ENCODE measurements at regions of chr13 and their contacts with region 1.

Region 1: DNA sequence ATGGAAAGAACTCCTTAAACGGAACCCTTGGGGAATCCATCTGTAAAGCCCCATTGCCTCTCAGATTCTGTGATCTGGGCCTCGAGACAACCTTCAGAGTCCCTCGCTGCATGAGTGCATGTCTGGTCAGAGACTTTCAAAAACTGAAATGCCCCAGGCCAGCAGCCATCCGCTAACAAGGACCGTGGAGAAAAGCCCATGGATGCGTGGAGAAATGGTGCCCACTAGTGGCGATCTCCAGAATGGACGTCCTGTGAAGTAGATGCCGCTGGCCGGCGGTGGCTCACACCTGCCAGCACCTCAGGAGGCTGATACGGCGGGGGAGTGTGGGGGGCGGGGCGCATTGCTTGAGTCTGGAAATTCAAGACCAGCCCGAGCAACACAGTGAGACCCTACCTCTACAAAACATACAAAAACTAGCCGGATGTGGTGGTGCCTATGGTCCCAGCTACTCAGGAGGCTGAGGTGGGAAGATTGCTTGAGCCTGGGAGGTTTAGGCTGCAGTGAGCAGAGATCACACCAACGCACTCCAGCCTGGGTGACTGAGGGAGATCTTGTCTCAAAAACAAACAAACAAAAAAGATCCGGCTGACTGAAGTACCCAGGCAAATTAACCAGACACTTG is 7.9 kb upstream of the CDC16 start:
- DNase-seq: peak; percentile 58
- ATAC-seq: peak; percentile 94
- H3K4me3 ChIP-seq: no peak overlapping the region
- H3K27ac ChIP-seq: no peak overlapping the region
- H3K4me1 ChIP-seq: no peaks in the 10 kb centered on the region
- H3K27me3 ChIP-seq: peaks cover 6 to 52% of the 10 kb centered on the region in 2 experiments
- CTCF ChIP-seq: peak; percentile 96
- EP300 ChIP-seq: no peak
- POLR2A ChIP-seq: no peak
- RAD21 ChIP-seq: peak; percentile 89

Region 2: DNA sequence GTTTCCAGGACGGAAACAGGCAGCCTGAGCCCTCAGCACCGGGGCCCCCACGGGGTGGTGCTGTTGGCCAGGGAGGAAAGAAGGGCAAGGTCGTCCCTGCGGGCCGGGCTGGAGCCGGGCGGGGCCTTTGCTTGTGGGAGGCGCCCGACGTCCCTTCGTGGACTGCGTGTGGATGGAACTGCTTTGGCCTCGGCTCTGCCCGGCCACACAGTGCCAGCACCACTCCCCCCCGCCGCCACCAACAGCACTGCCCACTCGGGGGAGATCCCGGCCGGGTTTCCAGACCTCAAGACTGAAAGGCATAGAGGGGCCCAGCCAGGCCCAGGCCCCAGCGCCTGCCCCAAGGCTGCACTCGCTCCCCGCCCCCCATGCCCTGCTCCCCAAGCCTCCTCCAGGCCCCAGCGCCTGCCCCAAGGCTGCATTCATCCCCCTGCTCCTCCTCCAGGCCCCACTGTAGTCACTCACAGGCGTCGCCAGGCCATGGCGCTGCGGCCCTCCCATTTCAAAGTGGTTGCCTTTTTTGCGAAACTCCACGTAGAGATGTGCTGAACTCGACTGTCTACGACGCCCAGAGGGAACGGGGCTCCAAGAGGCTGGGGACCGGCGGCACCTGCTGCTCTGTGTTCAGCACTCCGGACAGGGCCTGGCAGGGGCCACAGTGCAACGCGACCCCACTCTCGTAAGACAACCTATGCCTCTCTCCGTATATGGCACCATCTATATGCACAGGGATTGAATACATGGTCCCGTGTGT is 275.4 kb before region 1 on chr13:
- CTCF ChIA-PET with region 1: interaction called, 11 read pairs
- POLR2A ChIA-PET with region 1: no interaction called
- in situ Hi-C with region 1: no loop called
- intact Hi-C with region 1: no loop called
- DNase-seq: peak; percentile 23
- ATAC-seq: peak; percentile 87
- H3K4me3 ChIP-seq: no peak overlapping the region
- H3K27ac ChIP-seq: no peak overlapping the region
- H3K4me1 ChIP-seq: peaks cover 5% of the 10 kb centered on the region; the same call in 1 of the 2 replicates
- H3K27me3 ChIP-seq: peaks cover 4 to 13% of the 10 kb centered on the region in 2 experiments; a peak in 3 of 5 replicates
- CTCF ChIP-seq: peak; percentile 87
- EP300 ChIP-seq: no peak
- POLR2A ChIP-seq: no peak
- RAD21 ChIP-seq: peak; percentile 77

Region 3: DNA sequence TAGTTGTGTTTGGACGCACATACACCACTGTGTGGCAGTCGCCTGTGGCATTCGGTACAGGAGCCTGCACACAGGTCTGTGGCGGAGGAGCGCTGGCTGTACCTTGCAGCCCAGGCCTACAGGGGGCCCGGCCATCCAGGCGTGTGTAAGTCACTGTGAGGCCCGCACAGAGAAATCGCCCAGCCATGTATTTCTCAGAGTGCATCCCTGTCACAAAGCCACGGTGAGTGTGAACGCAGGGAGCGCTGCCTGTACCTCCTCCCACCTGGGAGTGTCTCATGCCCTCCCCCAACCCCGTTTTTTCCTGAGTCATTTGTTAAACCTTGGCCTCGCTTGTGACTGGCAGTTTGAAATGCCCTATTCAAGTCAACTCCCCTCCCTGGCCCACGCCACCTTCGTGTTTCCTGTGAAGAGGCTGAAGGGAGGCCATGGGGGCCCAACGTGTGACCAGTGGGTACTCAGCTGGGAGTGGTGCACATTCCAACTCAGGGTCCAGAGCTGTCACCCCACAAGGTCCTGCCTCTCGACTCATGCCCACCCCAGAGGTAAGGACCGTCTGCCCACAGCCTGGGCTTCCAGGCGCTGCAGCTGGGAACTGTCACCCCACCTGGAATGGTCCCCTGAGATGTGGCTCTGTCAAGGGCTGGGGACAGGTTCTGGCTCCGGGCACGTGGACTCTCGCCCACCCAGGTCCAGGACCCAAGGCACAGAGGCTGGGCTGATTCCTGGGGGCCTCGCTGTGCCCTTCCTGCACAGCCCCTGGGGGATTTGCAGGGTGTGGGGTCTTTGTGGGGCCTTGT is 82.8 kb before region 1 on chr13:
- CTCF ChIA-PET with region 1: interaction called, 12 read pairs
- POLR2A ChIA-PET with region 1: no interaction called
- in situ Hi-C with region 1: loop called (anchors 5 kb)
- intact Hi-C with region 1: loop called (anchors 1 kb)
- DNase-seq: peak; percentile 74
- ATAC-seq: peak; percentile 100
- H3K4me3 ChIP-seq: no peak overlapping the region
- H3K27ac ChIP-seq: no peak overlapping the region
- H3K4me1 ChIP-seq: no peaks in the 10 kb centered on the region
- H3K27me3 ChIP-seq: peaks cover 8 to 35% of the 10 kb centered on the region in 2 experiments; a peak in 4 of 5 replicates
- CTCF ChIP-seq: peak; percentile 62
- EP300 ChIP-seq: no peak
- POLR2A ChIP-seq: no peak
- RAD21 ChIP-seq: peak; percentile 72

Region 4: DNA sequence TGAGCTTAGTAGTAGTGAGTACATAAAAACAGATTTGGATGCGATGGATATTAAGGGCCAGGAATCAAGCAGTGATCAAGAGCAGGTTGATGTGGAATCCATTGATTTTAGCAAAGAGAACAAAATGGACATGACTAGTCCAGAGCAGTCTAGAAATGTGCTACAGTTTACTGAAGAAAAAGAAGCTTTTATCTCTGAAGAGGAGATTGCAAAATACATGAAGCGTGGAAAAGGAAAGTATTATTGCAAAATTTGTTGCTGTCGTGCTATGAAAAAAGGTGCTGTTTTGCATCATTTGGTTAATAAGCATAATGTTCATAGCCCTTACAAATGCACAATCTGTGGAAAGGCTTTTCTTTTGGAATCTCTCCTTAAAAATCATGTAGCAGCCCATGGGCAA is 98.9 kb after region 1 on chr13:
- CTCF ChIA-PET with region 1: no interaction called
- POLR2A ChIA-PET with region 1: no interaction called
- in situ Hi-C with region 1: no loop called
- intact Hi-C with region 1: no loop called
- DNase-seq: no peak
- ATAC-seq: no peak
- H3K4me3 ChIP-seq: no peak overlapping the region
- H3K27ac ChIP-seq: no peak overlapping the region
- H3K4me1 ChIP-seq: no peaks in the 10 kb centered on the region
- H3K27me3 ChIP-seq: no peaks in the 10 kb centered on the region
- CTCF ChIP-seq: no peak
- EP300 ChIP-seq: no peak
- POLR2A ChIP-seq: no peak
- RAD21 ChIP-seq: no peak